ENCODE measurements at regions of chr1 and their contacts with region 1.

Region 1: GRCh38 chr1:161763522-161764098 is 2.5 kb upstream of the ATF6 start:
- DNase-seq: no peak

Region 2: GRCh38 chr1:161726596-161727457 is 36.8 kb before region 1 on chr1:
- intact Hi-C with region 1: loop called (anchors 2 kb)
- DNase-seq: peak; percentile 90

Measured in cardiac septum (tissue), 1 donor.